Activated CD4-positive, alpha-beta T cell treated with anti-CD3 and anti-CD28 coated beads, Interleukin-2, amount 10 ng/mL, durations not matched to agents 24 days and 14 days (primary cell): ENCODE measurements at regions of chrX and their contacts with region 1.

Region 1: GRCh38 chrX:70592091-70592490 is 147.5 kb downstream of the DLG3 start:
- DNase-seq: peak; percentile 73
- H3K4me3 Mint-ChIP-seq: no peak overlapping the region
- H3K27ac Mint-ChIP-seq: peak overlapping the region; percentile 85
- H3K4me1 Mint-ChIP-seq: peaks cover 13% of the 10 kb centered on the region
- H3K27me3 Mint-ChIP-seq: no peaks in the 10 kb centered on the region

Region 2: DNA sequence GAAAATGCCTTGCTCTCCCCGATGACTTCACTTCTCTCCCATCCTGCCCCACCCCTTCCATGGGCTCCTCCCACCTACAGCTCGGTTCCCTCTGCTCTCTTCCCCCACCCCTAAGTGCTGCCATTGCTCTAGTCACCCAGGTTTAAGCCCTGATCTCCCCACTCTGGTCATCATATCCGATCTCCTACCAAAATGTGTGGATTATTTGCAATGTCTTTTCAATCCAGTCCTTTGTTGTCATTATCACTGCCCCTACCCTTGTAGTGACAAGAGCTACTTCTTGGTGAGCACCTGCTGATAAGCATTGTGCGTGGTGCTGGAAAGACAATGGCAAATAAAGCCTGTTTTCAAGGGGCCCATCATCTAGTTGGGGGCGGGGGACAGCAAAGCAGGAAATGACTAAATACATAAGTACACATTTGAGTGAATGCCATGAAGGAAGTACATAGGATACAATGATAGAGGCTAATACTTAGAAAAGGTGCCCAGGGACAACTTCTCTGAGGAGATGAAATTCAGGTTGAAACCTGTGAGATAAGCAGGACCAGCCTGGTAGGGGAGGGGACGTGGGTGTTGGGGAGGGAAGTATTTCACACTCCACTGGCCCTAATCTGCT is 83.7 kb before region 1 on chrX:
- intact Hi-C with region 1: loop called (anchors 10 kb)
- DNase-seq: peak; percentile 57
- H3K4me3 Mint-ChIP-seq: peak overlapping the region; percentile 72
- H3K27ac Mint-ChIP-seq: peak overlapping the region; percentile 85
- H3K4me1 Mint-ChIP-seq: peaks cover 35% of the 10 kb centered on the region
- H3K27me3 Mint-ChIP-seq: no peaks in the 10 kb centered on the region

Region 3: GRCh38 chrX:70656304-70656703 is 64.2 kb after region 1 on chrX:
- intact Hi-C with region 1: loop called (anchors 2 kb)
- DNase-seq: peak; percentile 61
- H3K4me3 Mint-ChIP-seq: peak overlapping the region; percentile 22
- H3K27ac Mint-ChIP-seq: peak overlapping the region; percentile 81
- H3K4me1 Mint-ChIP-seq: peaks cover 9% of the 10 kb centered on the region
- H3K27me3 Mint-ChIP-seq: no peaks in the 10 kb centered on the region